Left colon (tissue), 2 donors: ENCODE measurements at regions of chr9 and their contacts with region 1.

Region 1: GRCh38 chr9:106575823-106576222 is 287.1 kb upstream of the ZNF462 start:
- DNase-seq: no peak
- ATAC-seq: no peak

Region 2: GRCh38 chr9:106632621-106633020 is 56.8 kb after region 1 on chr9:
- intact Hi-C with region 1: loop called in 1 of 2 experiments (anchors 10 kb)
- DNase-seq: no peak
- ATAC-seq: no peak

Region 3: DNA sequence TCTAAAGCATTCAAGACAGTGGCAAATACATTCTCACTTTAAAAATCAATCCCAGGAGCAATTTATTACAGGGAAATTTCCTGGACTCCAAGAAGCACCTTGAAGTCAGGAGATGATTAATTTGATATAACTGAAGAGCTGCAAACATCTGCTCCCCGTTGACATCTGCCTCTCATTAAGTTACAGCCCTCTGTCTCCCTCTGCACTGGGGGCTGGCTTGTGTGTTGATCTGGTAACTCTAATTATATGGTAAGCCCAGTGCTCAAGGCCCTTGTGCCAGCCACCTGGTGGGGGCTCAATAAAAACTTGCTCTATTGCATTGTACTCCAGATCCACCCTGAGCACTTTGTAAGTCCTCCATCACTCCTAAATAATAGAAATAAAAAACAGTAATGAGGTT is 156.1 kb after region 1 on chr9:
- intact Hi-C with region 1: no loop called
- DNase-seq: no peak
- ATAC-seq: no peak